Common myeloid progenitor, CD34-positive (primary cell): ENCODE measurements at regions of chr2 and their contacts with region 1.

Region 1: GRCh38 chr2:165203689-165204559 is at the start of gene SCN3A:
- DNase-seq: peak; percentile 55 to 63 (median 62)
- H3K4me3 ChIP-seq: peak within 1 kb of the TSS in 5 of 7 experiments; percentile 1 to 61 (median 22)
- H3K27ac ChIP-seq: no peak within 1 kb of the TSS
- H3K4me1 ChIP-seq: peaks cover 4 to 10% (median 8%) of the 10 kb centered on the region in 4 experiments
- H3K27me3 ChIP-seq: no peaks in the 10 kb centered on the region

Region 2: GRCh38 chr2:165082479-165082878 is 121.4 kb before region 1 on chr2:
- CTCF ChIA-PET with region 1: no interaction called
- POLR2A ChIA-PET with region 1: no interaction called
- DNase-seq: no peak
- H3K4me3 ChIP-seq: no peak overlapping the region
- H3K27ac ChIP-seq: no peak overlapping the region
- H3K4me1 ChIP-seq: no peaks in the 10 kb centered on the region
- H3K27me3 ChIP-seq: no peaks in the 10 kb centered on the region

Region 3: DNA sequence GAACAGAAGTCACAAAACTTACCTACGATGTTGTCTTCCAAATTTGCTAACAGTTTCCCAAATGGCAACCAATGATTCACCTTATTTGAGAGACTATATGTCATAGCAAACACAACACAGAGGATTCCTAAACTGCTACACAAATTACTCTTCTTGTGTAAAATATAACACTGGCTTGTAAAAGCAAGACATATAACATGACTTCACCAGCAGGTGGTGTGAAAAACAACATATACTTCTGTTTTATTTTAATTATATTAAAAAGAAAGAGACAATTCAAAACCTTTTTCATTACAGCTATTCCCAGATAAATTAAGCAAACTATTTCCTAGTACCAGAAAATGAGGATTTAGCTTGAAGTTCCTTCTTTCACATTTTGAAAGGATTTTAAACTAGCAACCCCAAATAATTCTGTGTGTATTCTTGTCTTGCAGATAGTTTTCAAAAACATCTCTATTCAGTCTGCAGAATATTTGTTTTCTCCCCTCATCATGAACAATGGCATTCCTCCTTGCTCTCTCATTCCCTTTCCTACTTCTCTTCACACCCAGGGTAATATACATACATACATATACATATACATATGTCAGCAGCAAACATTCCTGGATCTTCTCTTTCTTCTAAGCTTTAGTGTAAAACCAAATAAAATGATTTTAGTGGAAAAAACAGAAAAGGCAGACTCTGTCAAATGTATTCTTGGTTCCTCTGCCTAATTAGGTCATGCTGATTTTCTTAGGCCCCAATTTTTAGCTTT is 62.1 kb before region 1 on chr2:
- CTCF ChIA-PET with region 1: interaction called, 11 read pairs
- POLR2A ChIA-PET with region 1: no interaction called
- DNase-seq: peak in 2 of 3 donors; percentile 14 to 29
- H3K4me3 ChIP-seq: no peak overlapping the region
- H3K27ac ChIP-seq: no peak overlapping the region
- H3K4me1 ChIP-seq: peaks cover 0 to 6% (median 3%) of the 10 kb centered on the region in 4 experiments
- H3K27me3 ChIP-seq: no peaks in the 10 kb centered on the region